ENCODE measurements at regions of chr12 and their contacts with region 1.

Region 1: GRCh38 chr12:49776413-49776812 is 35.1 kb downstream of the TMBIM6 start:
- DNase-seq: peak; percentile 56 to 83 (median 72)
- ATAC-seq: peak; percentile 95
- H3K4me3 ChIP-seq: no peak overlapping the region
- H3K27ac ChIP-seq: no peak overlapping the region
- H3K4me1 ChIP-seq: peaks cover 0 to 9% of the 10 kb centered on the region in 2 donors
- H3K27me3 ChIP-seq: peaks cover 0 to 5% of the 10 kb centered on the region in 2 donors
- CTCF ChIP-seq: peak; percentile 81 to 83

Region 2: DNA sequence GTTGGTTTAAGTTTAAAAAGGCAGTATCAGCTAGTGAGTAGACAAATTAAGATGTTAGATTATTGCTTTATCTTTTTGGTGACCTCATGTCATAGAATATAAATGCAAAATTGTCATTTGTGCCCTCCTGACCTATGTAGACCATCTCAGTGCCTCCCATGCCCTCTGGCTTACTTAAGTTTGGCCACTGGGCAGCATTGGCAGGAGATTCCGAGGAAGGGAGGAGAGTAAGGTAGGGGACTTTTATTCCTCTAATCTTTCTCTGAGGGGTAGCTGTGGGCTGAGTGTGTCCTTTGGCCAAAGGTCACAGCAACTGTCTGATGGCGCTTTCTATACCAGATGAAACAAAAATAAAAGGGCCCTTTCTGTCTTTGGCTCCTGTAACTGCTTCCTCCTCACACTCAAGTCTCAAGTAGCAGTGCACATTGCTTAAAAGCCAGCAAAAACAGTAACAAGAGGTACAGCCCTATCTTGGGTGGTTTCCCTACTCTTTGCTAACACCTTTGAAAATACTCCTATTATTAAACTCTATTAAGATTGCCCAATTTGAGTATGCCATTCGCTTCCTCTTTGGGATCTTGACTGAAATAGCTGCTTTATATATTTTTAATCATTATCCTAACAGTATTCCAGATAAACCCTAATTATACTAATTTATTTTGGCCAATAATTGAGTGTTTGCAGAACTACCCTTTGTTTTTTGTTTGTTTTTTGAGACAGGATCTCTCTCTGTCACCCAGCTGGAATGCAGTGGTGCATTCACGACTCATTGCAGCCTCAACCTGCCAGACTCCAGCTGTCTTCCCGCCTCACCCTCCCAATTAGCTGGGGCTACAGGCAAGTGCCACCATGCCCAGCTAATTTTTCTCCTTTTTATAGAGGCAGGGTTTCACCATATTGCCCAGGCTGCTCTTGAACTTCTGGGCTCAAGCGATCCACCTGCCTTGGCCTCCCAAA is 294.0 kb before region 1 on chr12:
- intact Hi-C with region 1: no loop called
- DNase-seq: peak in 1 of 4 donors; percentile 30
- ATAC-seq: peak; percentile 90
- H3K4me3 ChIP-seq: no peak overlapping the region
- H3K27ac ChIP-seq: no peak overlapping the region
- H3K4me1 ChIP-seq: no peaks in the 10 kb centered on the region
- H3K27me3 ChIP-seq: no peaks in the 10 kb centered on the region
- CTCF ChIP-seq: no peak

Region 3: DNA sequence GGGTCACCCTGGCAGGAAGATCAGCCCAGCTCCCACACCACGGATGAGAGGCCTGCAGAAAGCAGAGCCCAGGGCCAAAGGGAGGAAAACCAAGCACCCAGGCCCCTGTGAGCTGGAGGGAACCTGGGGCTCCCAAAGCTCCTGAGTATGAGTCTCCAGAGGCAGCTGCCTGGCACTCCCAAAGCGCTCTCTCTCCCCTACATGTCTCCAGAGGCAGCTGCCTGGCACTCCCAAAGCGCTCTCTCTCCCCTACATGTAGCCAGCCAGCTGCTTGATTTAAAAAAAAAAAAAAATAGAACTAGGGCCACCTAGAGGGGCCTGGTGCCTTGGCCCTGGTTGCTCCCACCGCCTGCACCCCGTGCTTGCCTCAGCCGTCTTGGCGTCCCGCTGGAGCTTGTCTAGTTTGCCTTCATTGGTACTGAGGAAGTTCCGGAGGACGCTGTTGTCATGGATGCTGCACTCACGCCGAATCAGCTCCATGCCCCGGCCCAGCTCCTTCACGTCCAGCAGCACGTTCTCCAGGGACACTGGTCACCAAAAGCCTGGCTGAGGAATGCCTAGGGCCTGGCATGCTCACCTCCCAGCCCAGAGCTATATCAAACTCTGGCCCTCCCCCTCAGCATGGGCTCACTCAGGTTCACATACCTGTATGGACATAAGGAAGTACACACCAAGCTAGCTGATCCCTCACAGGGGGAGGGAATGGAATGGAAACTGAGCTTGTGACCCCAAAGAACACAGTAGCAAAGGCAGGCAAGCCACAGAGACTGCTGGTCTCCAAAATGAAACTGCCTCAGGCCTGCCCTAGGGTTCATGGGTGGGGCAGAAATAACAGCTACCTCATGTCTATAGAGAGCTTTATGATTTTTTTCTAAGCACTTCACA is 128.3 kb before region 1 on chr12:
- intact Hi-C with region 1: no loop called
- DNase-seq: no peak
- ATAC-seq: peak; percentile 20
- H3K4me3 ChIP-seq: no peak overlapping the region
- H3K27ac ChIP-seq: peak overlapping the region; percentile 56 to 72
- H3K4me1 ChIP-seq: peaks cover 11 to 49% of the 10 kb centered on the region in 2 donors
- H3K27me3 ChIP-seq: no peaks in the 10 kb centered on the region
- CTCF ChIP-seq: no peak

Region 4: DNA sequence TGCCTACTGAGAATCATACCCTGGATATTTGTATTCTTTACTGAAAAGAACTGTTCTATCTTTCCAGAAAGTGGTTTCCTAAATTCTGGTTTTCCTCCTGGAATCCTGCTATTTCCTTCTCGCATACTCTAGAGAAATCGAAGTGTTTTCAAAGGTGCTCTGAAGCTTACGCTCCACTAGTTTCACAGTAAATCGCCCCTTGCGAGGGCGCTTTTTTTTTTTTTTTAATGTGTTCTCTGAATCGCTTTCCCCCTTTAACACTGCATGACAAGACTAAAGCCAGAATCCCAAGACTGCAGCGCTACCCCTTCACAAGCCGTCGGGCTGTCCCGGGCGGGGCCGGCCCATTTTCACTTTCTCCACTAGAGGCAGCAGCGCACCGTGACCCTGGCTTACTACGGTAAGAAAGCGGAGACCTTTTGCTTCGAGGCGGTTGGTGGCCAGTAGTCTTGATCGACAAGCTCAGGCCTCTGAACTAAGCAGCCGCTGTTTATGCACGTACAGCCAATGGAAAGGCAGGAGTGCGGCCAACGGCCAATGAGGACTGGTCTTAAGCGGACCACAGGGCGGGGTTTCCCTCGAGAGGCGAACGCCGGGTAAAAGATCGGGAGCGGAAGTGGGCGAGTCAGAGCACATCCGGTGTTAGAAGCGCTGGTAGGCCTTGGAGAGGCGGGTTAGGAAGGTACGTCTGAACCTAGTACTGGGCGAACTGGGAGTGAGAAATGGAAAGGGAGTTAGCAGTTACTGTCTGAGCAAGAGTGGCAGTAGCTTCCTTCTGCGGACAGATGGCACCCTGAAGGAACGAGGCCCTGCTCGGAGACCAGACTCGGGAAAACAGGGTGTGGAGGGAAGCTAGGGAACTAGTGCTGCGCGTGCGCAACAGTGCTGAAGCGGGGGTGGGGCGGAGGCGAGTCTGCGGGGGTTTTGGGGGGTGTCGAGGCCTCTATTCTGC is 35.2 kb before region 1 on chr12 and contains the start of gene TMBIM6:
- intact Hi-C with region 1: no loop called
- DNase-seq: peak; percentile 98 to 100 (median 100)
- ATAC-seq: peak; percentile 97
- H3K4me3 ChIP-seq: peak within 1 kb of the TSS; percentile 56 to 80
- H3K27ac ChIP-seq: peak within 1 kb of the TSS; percentile 97 to 98
- H3K4me1 ChIP-seq: peaks cover 25 to 45% of the 10 kb centered on the region in 2 donors
- H3K27me3 ChIP-seq: no peaks in the 10 kb centered on the region
- CTCF ChIP-seq: peak; percentile 97
- polyA plus RNA-seq, gene TMBIM6: 422 to 526 (median 469) TPM

Region 5: DNA sequence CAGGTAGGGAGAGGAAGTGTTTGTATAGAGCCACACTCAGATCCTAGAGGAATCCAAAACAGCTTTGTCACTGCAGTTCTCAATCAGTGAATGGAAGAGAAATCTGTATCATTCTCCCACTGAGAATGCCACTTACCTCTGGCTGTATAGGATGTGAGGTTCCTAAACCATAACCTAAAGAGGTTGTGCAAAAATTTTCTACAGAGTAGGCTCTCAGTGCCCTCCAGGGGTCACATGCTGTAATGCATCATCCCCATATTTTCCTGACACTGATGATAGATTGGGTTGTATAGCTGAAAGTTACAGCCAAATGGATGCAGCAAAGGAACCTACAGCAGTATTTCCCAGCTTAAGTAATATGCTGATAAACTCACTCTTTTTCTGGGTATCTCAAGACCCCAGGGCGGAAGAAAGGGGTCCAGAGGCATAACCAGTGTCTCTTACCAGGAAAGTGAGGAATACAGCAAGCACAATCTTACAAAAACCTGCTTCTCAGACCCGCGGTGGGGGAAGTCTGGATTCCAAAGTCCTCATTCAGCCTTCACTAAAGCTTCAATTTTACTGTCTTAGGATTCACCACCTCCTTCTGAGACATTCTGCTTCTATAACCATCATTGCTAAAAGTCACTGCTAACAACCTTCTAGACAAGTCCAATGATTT is 62.7 kb after region 1 on chr12:
- intact Hi-C with region 1: loop called in 1 of 2 experiments (anchors 2 kb)
- DNase-seq: peak in 2 of 4 donors; percentile 17 to 35
- ATAC-seq: no peak
- H3K4me3 ChIP-seq: no peak overlapping the region
- H3K27ac ChIP-seq: no peak overlapping the region
- H3K4me1 ChIP-seq: peaks cover 8 to 19% of the 10 kb centered on the region in 2 donors
- H3K27me3 ChIP-seq: no peaks in the 10 kb centered on the region
- CTCF ChIP-seq: peak; percentile 43 to 55